ENCODE measurements at regions of chr16 and their contacts with region 1.

Region 1: DNA sequence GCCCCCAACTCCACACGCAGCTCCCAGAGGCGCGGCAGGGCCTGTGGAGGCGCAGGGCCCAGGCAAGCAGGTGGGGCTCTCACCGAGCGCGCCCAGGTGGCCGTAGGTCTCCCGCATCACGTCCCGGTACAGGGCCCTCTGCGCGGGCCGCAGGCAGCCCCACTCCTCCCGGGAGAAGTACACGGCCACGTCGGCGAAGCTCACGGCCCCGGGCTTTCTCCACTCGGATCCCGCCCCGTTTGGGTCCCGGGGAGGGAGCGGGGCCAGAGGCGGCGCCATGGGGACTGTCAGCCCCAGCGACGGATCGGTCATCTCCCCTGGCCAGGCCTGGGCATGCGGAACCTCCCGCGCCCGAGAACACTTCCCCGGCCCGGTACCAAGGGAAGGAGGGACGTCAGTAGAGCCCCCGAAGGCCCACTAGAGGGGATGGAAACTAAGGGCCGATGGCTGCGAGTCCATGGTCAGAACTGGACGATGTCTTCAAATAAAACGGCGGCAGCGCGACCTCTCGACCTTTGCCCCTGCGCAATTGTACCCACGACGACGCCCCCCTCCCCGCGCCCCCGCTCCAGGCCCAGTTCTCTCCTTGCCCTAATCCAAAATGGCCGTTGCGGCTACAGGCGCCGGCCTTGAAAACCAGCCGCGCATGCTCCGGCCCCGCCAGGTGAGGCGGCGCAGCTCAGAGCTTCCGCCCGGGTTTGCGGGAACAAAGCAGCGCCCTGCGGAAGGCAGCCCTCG is at the start of gene ZNF747:
- DNase-seq: peak; percentile 84 to 92 (median 89)
- ATAC-seq: peak; percentile 87
- H3K4me3 ChIP-seq: peak within 1 kb of the TSS; percentile 60
- H3K4me3 Mint-ChIP-seq: peak within 1 kb of the TSS; percentile 91 to 100 (median 96)
- H3K27ac ChIP-seq: peak within 1 kb of the TSS; percentile 98
- H3K27ac Mint-ChIP-seq: peak within 1 kb of the TSS; percentile 94 to 99 (median 98)
- H3K4me1 ChIP-seq: peaks cover 8 to 13% of the 10 kb centered on the region in 2 donors
- H3K4me1 Mint-ChIP-seq: peaks cover 14 to 53% (median 43%) of the 10 kb centered on the region in 7 donors
- H3K27me3 ChIP-seq: no peaks in the 10 kb centered on the region
- H3K27me3 Mint-ChIP-seq: no peaks in the 10 kb centered on the region
- total RNA-seq, gene ZNF747: 9.1 to 17.4 (median 13.8) TPM

Region 2: DNA sequence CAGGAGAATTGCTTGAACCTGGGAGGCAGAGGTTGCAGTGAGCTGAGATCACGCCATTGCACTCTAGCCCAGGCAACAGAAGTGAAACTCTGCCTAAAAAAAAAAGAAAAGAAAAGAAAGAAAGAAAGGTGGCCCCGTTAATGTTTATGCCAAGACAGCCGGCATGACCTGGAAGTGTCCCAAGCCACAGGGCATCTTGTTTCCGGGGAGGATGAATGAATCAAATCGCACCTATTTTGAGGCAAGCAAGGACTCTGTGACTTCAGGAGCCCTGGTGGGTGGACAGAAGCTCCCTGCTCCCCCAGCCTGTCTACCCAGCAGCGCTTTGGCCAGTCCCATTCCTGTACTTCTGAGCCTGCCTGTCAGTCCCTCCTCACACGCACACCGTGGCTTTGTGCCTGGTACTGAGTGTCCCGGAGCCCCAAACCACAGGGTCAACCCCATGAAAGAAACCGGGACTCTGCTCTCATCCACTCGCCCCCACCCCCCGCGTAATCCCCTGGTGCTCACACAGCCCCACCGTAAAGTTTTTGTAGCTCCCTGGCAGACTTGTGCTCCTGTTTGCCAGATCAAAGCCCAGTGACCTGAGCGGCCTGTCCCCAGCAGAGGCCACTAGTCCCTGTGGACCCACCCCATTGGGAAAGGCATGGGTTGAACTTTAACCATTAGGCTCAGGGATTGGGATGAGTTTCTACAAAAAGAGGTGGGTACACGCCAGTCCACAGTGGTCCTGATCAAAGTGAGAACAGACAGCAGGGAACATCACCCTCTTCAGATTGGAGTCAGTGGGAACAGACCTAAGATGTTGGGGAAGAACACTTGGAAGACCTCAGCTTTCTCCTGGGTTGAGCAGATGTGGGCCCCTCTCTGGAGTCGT is 198.7 kb before region 1 on chr16:
- CTCF ChIA-PET with region 1: no interaction called
- POLR2A ChIA-PET with region 1: no interaction called
- intact Hi-C with region 1: no loop called
- DNase-seq: peak in 1 of 9 donors; percentile 26
- ATAC-seq: no peak
- H3K4me3 ChIP-seq: peak overlapping the region; percentile 50
- H3K4me3 Mint-ChIP-seq: peak overlapping the region; percentile 80 to 96 (median 87)
- H3K27ac ChIP-seq: peak overlapping the region; percentile 74
- H3K27ac Mint-ChIP-seq: peak overlapping the region; percentile 57 to 91 (median 81)
- H3K4me1 ChIP-seq: peaks cover 7% of the 10 kb centered on the region in 2 donors
- H3K4me1 Mint-ChIP-seq: peaks cover 3 to 30% (median 17%) of the 10 kb centered on the region in 7 donors
- H3K27me3 ChIP-seq: no peaks in the 10 kb centered on the region
- H3K27me3 Mint-ChIP-seq: no peaks in the 10 kb centered on the region

Region 3: GRCh38 chr16:30445408-30446202 is 88.9 kb before region 1 on chr16 and contains the start of gene SEPHS2:
- CTCF ChIA-PET with region 1: interaction called, 7 read pairs
- POLR2A ChIA-PET with region 1: interaction called, 25 read pairs
- intact Hi-C with region 1: loop called (anchors 1 to 2 kb)
- DNase-seq: peak; percentile 84 to 96 (median 94)
- ATAC-seq: peak; percentile 96
- H3K4me3 ChIP-seq: peak within 1 kb of the TSS; percentile 97
- H3K4me3 Mint-ChIP-seq: peak within 1 kb of the TSS; percentile 85 to 97 (median 95)
- H3K27ac ChIP-seq: peak within 1 kb of the TSS; percentile 92
- H3K27ac Mint-ChIP-seq: peak within 1 kb of the TSS; percentile 90 to 98 (median 96)
- H3K4me1 ChIP-seq: peaks cover 26 to 37% of the 10 kb centered on the region in 2 donors
- H3K4me1 Mint-ChIP-seq: peaks cover 30 to 47% (median 41%) of the 10 kb centered on the region in 7 donors
- H3K27me3 ChIP-seq: no peaks in the 10 kb centered on the region
- H3K27me3 Mint-ChIP-seq: no peaks in the 10 kb centered on the region
- total RNA-seq, gene SEPHS2: 20.9 to 69.6 (median 47.1) TPM

Region 4: DNA sequence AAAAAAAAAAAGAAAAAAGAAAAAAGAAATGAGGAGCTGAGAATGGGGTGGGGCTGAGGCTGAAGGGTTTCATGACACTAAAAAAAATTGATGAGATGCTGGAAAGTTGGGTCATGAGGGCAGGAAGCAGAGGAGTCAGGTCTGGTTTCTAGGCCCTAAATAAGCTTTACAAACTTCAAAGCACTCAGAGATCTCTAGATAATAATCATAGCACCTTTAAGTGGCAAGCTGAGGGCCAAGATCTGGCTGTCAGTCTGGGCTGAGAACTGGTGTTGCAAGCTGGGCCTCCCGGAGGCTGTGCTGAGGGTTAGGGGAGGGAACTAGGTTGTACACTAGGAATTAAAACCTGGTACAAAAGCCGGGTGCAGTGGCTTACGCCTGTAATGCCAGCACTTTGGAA is 17.2 kb after region 1 on chr16:
- CTCF ChIA-PET with region 1: interaction called, 37 read pairs
- POLR2A ChIA-PET with region 1: interaction called, 159 read pairs
- intact Hi-C with region 1: loop called in 1 of 2 experiments (anchors 1 kb)
- DNase-seq: peak in 8 of 9 donors; percentile 53 to 82 (median 74)
- ATAC-seq: peak; percentile 89
- H3K4me3 ChIP-seq: peak overlapping the region; percentile 5
- H3K4me3 Mint-ChIP-seq: peak overlapping the region; percentile 32 to 87 (median 75)
- H3K27ac ChIP-seq: peak overlapping the region; percentile 59
- H3K27ac Mint-ChIP-seq: peak overlapping the region; percentile 83 to 98 (median 93)
- H3K4me1 ChIP-seq: peaks cover 24 to 32% of the 10 kb centered on the region in 2 donors
- H3K4me1 Mint-ChIP-seq: peaks cover 49 to 65% (median 55%) of the 10 kb centered on the region in 7 donors
- H3K27me3 ChIP-seq: no peaks in the 10 kb centered on the region
- H3K27me3 Mint-ChIP-seq: no peaks in the 10 kb centered on the region

Region 5: DNA sequence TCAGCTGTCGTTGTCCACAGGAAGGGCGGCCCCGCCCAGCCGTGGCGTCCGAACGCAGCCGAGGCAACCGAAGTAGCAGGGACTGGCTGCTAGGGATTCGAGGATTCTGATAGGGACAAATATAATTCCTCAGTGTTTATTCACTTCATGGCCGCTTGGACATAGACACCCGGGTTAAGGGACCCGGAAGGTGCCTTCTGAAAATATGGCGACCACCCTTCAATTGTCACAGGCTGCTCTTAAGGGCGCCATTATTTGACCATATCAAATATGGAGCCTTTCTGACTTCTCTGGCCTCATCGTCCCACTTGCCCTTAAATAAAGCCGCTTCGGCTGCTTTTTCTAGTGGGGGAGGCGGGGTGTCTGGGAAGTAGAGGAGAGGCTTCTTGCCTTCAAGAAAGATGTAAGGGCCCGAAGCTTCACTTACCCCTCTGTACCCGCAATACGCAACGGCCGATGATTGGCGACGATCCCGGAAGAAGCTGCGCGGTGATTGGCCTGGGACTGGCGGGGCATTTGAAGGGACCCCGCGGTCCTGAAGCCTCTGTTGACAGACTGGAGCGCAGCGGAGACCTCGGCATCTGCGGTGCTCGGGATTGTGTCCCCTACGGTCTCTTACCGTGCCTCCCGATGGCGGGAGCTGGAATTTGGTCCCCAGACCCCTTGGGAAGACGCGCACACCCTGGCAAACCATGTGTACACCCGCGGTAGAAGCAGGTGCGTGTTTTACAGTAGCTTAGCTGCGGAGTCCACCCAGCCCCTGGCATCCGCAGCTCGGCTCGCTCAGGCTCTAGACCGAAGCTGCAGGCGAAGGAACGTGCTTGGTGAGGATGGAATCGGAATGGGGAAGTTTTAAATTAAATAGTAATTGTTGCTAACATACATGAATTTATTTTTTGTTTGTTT is 37.4 kb after region 1 on chr16 and contains the start of gene ZNF688:
- CTCF ChIA-PET with region 1: interaction called, 11 read pairs
- POLR2A ChIA-PET with region 1: interaction called, 52 read pairs
- intact Hi-C with region 1: loop called (anchors 1 kb)
- DNase-seq: peak; percentile 74 to 99 (median 97)
- ATAC-seq: peak; percentile 89
- H3K4me3 ChIP-seq: peak within 1 kb of the TSS; percentile 88
- H3K4me3 Mint-ChIP-seq: peak within 1 kb of the TSS; percentile 87 to 98 (median 90)
- H3K27ac ChIP-seq: peak within 1 kb of the TSS; percentile 94
- H3K27ac Mint-ChIP-seq: peak within 1 kb of the TSS; percentile 92 to 98 (median 95)
- H3K4me1 ChIP-seq: peaks cover 36 to 38% of the 10 kb centered on the region in 2 donors
- H3K4me1 Mint-ChIP-seq: peaks cover 17 to 51% (median 39%) of the 10 kb centered on the region in 7 donors
- H3K27me3 ChIP-seq: no peaks in the 10 kb centered on the region
- H3K27me3 Mint-ChIP-seq: no peaks in the 10 kb centered on the region
- total RNA-seq, gene ZNF688: 8.8 to 24.3 (median 16.3) TPM

Region 6: DNA sequence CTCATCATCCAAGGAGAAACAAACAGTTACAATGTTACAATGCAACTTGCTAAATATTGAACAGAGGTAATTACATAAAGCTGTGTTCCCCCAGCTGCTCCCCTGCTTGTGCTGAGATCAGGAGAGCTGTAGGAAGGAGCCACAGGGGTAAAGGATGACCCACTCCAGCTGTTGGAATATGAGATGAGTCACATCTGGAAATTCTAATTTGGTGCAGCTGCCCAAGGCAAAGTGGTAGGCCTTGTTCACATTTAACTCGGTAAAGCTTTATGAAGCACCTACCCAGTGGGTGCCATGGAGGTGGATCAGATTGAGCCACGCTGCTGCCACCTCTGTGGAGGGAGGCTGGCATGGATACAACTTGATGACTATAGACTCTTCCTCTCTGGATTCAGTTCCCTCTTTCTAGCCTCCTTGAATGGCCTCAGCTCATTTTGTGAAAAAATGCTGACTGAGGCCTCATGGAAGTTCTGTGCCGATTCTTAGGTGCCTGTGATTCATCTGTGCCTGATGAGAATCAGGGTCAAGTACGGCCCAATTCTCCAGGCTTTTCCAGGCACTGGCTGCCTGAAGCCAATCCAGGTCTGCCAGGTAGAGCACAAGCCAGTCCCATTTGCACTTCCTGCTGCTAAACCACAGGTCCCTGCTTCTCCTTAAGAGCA is 68.2 kb after region 1 on chr16:
- CTCF ChIA-PET with region 1: interaction called, 5 read pairs
- POLR2A ChIA-PET with region 1: no interaction called
- intact Hi-C with region 1: loop called (anchors 1 kb)
- DNase-seq: no peak
- ATAC-seq: peak; percentile 49
- H3K4me3 ChIP-seq: no peak overlapping the region
- H3K4me3 Mint-ChIP-seq: no peak overlapping the region
- H3K27ac ChIP-seq: no peak overlapping the region
- H3K27ac Mint-ChIP-seq: no peak overlapping the region
- H3K4me1 ChIP-seq: no peaks in the 10 kb centered on the region
- H3K4me1 Mint-ChIP-seq: peaks cover 0 to 15% (median 11%) of the 10 kb centered on the region in 7 donors
- H3K27me3 ChIP-seq: no peaks in the 10 kb centered on the region
- H3K27me3 Mint-ChIP-seq: no peaks in the 10 kb centered on the region

Region 7: GRCh38 chr16:30813821-30814189 is 279.3 kb after region 1 on chr16:
- CTCF ChIA-PET with region 1: no interaction called
- POLR2A ChIA-PET with region 1: no interaction called
- intact Hi-C with region 1: no loop called
- DNase-seq: no peak
- ATAC-seq: no peak
- H3K4me3 ChIP-seq: peak overlapping the region; percentile 70
- H3K4me3 Mint-ChIP-seq: peak overlapping the region; percentile 84 to 92 (median 86)
- H3K27ac ChIP-seq: peak overlapping the region; percentile 73
- H3K27ac Mint-ChIP-seq: peak overlapping the region; percentile 61 to 98 (median 88)
- H3K4me1 ChIP-seq: peaks cover 7% of the 10 kb centered on the region in 2 donors
- H3K4me1 Mint-ChIP-seq: peaks cover 5 to 15% (median 13%) of the 10 kb centered on the region in 7 donors
- H3K27me3 ChIP-seq: no peaks in the 10 kb centered on the region
- H3K27me3 Mint-ChIP-seq: peaks cover 0 to 3% (median 0%) of the 10 kb centered on the region in 5 donors

Measured in naive thymus-derived CD4-positive, alpha-beta T cell (primary cell).